CD8-positive, alpha-beta T cell (primary cell): ENCODE measurements at regions of chr4 and their contacts with region 1.

Region 1: GRCh38 chr4:167021545-167022155 is 212.6 kb downstream of the SPOCK3 start:
- DNase-seq: peak in 7 of 9 experiments; percentile 17 to 52 (median 35)
- ATAC-seq: no peak
- H3K4me3 ChIP-seq: no peak overlapping the region
- H3K4me3 Mint-ChIP-seq: no peak overlapping the region
- H3K27ac ChIP-seq: no peak overlapping the region
- H3K27ac Mint-ChIP-seq: no peak overlapping the region
- H3K4me1 ChIP-seq: no peaks in the 10 kb centered on the region
- H3K4me1 Mint-ChIP-seq: no peaks in the 10 kb centered on the region
- H3K27me3 ChIP-seq: no peaks in the 10 kb centered on the region
- H3K27me3 Mint-ChIP-seq: no peaks in the 10 kb centered on the region
- CTCF ChIP-seq: peak; percentile 78

Region 2: GRCh38 chr4:166981847-166982246 is 39.8 kb before region 1 on chr4:
- CTCF ChIA-PET with region 1: no interaction called
- POLR2A ChIA-PET with region 1: no interaction called
- intact Hi-C with region 1: no loop called
- DNase-seq: no peak
- ATAC-seq: no peak
- H3K4me3 ChIP-seq: no peak overlapping the region
- H3K4me3 Mint-ChIP-seq: no peak overlapping the region
- H3K27ac ChIP-seq: no peak overlapping the region
- H3K27ac Mint-ChIP-seq: no peak overlapping the region
- H3K4me1 ChIP-seq: no peaks in the 10 kb centered on the region
- H3K4me1 Mint-ChIP-seq: no peaks in the 10 kb centered on the region
- H3K27me3 ChIP-seq: no peaks in the 10 kb centered on the region
- H3K27me3 Mint-ChIP-seq: no peaks in the 10 kb centered on the region
- CTCF ChIP-seq: no peak

Region 3: GRCh38 chr4:168076989-168077725 is 1055.5 kb after region 1 on chr4:
- CTCF ChIA-PET with region 1: no interaction called
- POLR2A ChIA-PET with region 1: no interaction called
- intact Hi-C with region 1: loop called in 1 of 2 experiments (anchors 2 kb)
- DNase-seq: peak in 5 of 9 experiments; percentile 7 to 26 (median 13)
- ATAC-seq: no peak
- H3K4me3 ChIP-seq: no peak overlapping the region
- H3K4me3 Mint-ChIP-seq: no peak overlapping the region
- H3K27ac ChIP-seq: no peak overlapping the region
- H3K27ac Mint-ChIP-seq: no peak overlapping the region
- H3K4me1 ChIP-seq: no peaks in the 10 kb centered on the region
- H3K4me1 Mint-ChIP-seq: no peaks in the 10 kb centered on the region
- H3K27me3 ChIP-seq: no peaks in the 10 kb centered on the region
- H3K27me3 Mint-ChIP-seq: no peaks in the 10 kb centered on the region
- CTCF ChIP-seq: peak; percentile 48

Region 4: GRCh38 chr4:168153596-168154440 is 1132.2 kb after region 1 on chr4:
- CTCF ChIA-PET with region 1: no interaction called
- POLR2A ChIA-PET with region 1: no interaction called
- intact Hi-C with region 1: loop called in 1 of 2 experiments (anchors 5 kb)
- DNase-seq: peak; percentile 39 to 71 (median 58)
- ATAC-seq: peak; percentile 57
- H3K4me3 ChIP-seq: no peak overlapping the region
- H3K4me3 Mint-ChIP-seq: peak overlapping the region; percentile 17
- H3K27ac ChIP-seq: no peak overlapping the region
- H3K27ac Mint-ChIP-seq: no peak overlapping the region
- H3K4me1 ChIP-seq: no peaks in the 10 kb centered on the region
- H3K4me1 Mint-ChIP-seq: peaks cover 5% of the 10 kb centered on the region
- H3K27me3 ChIP-seq: no peaks in the 10 kb centered on the region
- H3K27me3 Mint-ChIP-seq: peaks cover 3% of the 10 kb centered on the region
- CTCF ChIP-seq: peak; percentile 77